Ascending aorta (tissue), 2 donors: ENCODE measurements at regions of chr2 and their contacts with region 1.

Region 1: DNA sequence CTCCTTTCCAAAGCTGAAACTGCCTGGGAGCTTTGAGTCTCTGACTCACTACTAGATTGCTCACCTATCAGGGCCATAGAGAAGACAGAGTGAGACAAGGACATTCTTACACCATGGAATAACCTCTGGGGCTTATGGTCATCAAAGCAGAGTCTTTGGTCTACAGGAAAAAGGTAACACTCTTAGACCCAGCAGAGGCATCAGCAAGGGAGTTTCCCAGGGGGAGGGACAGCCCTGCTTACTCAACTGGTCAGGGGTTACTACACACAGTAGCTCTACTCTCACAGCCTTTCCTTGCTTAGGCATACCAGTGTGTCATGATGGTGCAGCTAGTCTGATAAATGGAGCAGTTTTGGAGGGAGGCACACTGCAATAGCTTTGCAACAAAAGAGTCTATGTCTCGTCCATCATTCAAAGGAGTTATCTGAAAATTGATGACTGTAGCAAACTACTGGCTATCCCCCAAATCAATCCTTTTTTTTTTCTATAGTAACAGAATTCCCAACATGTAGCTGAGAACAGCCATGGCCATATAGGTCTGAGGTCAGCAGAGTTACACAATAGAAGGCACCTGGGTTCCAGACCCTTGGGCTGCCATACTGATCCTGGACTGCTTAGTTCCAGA is 22.4 kb upstream of the CD28 start:
- DNase-seq: peak in 1 of 2 donors; percentile 74
- H3K4me3 ChIP-seq: no peak overlapping the region
- H3K27ac ChIP-seq: peak overlapping the region; percentile 88 to 96
- H3K4me1 ChIP-seq: peaks cover 18 to 65% of the 10 kb centered on the region in 2 donors
- H3K27me3 ChIP-seq: no peaks in the 10 kb centered on the region
- CTCF ChIP-seq: no peak

Region 2: DNA sequence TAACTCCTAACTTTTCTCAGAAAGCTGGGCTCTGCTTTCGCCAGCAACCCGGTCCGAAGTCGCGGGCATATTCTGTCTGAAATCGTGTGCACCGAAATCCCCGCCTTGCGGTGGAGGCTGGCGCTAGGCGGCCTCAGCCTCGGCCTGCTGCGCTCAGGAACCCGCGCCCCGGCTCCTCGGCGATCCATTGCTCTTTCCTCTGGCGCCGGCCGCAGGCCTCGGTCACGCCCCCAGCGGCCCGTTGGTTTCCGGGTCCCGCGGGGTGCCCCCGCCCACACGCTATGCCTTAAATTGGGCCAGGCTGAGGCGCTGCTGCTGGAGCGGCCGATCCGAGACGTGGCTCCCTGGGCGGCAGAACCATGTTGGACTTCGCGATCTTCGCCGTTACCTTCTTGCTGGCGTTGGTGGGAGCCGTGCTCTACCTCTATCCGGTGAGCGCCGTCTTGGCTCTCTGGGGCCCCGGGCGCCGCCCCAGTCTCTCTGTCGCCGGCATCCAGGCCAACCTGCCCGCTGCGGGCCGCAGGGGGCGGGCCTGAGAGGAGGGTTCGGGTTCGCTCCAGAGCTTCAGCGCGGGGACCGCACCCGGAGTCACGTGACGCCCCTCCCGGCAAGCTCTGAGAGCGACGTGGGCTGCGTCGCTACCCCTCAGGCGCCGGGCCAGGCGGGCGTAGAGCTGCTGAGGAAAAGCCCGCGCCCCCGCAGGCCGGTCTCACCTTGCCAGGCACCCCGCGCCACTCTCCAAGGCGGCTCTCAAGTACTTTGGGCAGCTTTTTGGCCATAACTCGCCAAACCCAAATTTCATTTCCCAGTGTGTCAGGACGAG is 445.1 kb before region 1 on chr2 and contains the start of gene CYP20A1:
- intact Hi-C with region 1: loop called (anchors 2 kb)
- DNase-seq: peak; percentile 82 to 98
- H3K4me3 ChIP-seq: peak within 1 kb of the TSS; percentile 51 to 72
- H3K27ac ChIP-seq: peak within 1 kb of the TSS; percentile 94 to 96
- H3K4me1 ChIP-seq: peaks cover 0 to 16% of the 10 kb centered on the region in 2 donors
- H3K27me3 ChIP-seq: no peaks in the 10 kb centered on the region
- CTCF ChIP-seq: peak in 2 of 3 experiments; percentile 21 to 40
- total RNA-seq, gene CYP20A1: 13.6 TPM

Region 3: DNA sequence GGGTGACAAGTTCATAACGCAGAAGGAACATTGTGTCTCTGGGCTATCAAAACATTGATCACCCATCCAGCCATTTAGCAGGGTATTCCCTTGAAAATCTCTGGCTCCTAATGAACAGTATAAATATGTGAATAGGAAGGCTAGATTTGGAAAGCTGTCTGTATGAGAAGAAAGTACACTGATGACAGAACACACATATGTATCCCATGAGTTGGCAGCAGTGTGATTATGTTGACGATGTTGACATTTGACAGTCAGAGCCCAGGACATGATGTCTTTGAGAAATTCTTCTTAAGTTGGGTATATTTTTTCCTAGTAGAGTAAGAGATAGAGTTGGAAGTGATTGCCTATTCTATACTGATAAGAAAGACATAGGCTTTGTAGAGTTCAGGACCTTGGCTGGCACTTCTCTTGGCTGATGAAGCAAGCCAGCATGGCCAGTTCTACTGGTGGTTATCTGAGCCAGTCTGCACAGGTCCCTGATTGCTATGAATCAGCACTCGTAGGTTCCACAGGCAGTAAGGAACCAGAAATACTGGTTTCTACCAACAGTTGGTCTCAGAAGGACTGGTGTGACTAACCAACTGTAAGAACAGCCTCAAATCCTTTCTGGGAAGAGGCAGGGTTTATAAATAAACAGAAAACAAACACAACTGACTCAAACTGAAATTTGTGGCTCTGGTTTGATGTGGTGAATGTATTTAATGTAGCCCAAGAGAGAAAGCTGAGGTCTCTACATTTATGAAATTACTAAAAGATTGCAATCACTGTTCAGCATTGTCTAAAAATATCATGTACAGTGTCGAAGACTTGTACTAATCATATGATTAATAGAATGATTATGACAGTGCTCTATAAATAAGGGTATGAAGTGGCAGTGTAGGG is 105.0 kb before region 1 on chr2:
- intact Hi-C with region 1: loop called (anchors 2 kb)
- DNase-seq: peak in 1 of 2 donors; percentile 76
- H3K4me3 ChIP-seq: no peak overlapping the region
- H3K27ac ChIP-seq: peak overlapping the region; percentile 56 to 76
- H3K4me1 ChIP-seq: peaks cover 3 to 21% of the 10 kb centered on the region in 2 donors
- H3K27me3 ChIP-seq: no peaks in the 10 kb centered on the region
- CTCF ChIP-seq: no peak

Region 4: DNA sequence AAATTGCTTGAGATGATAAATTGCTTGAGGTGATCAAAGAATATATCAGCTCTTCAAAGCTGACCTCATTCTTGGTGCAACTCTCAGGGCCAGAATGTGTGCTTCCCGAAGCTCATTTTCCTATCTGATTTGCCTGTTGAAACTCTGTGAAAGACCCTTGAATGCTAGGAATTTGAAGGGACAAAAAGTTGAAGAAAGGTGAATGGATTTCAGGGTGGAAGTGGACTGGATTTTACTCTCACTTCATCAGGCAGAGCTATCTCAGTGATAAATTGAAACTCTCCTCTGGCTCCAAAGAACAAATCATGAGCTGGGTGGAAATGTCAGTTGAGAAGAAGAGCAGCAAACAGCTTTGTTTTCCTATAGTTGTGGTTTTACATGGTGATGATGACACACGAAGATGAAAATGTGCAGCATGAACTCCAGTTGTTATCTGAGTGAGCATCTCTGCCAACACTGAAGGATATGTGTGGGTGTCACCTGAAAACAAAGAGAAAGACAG is 56.8 kb after region 1 on chr2:
- intact Hi-C with region 1: loop called (anchors 5 kb)
- DNase-seq: no peak
- H3K4me3 ChIP-seq: no peak overlapping the region
- H3K27ac ChIP-seq: no peak overlapping the region
- H3K4me1 ChIP-seq: peaks cover 0 to 2% of the 10 kb centered on the region in 2 donors
- H3K27me3 ChIP-seq: no peaks in the 10 kb centered on the region
- CTCF ChIP-seq: no peak

Region 5: GRCh38 chr2:203804070-203804469 is 120.0 kb after region 1 on chr2:
- intact Hi-C with region 1: loop called (anchors 2 kb)
- DNase-seq: peak in 1 of 2 donors; percentile 81
- H3K4me3 ChIP-seq: no peak overlapping the region
- H3K27ac ChIP-seq: peak overlapping the region; percentile 20 to 77
- H3K4me1 ChIP-seq: peaks cover 0 to 12% of the 10 kb centered on the region in 2 donors
- H3K27me3 ChIP-seq: no peaks in the 10 kb centered on the region
- CTCF ChIP-seq: no peak

Region 6: GRCh38 chr2:204152616-204153015 is 468.6 kb after region 1 on chr2:
- intact Hi-C with region 1: no loop called
- DNase-seq: no peak
- H3K4me3 ChIP-seq: no peak overlapping the region
- H3K27ac ChIP-seq: no peak overlapping the region
- H3K4me1 ChIP-seq: peaks cover 0 to 4% of the 10 kb centered on the region in 2 donors
- H3K27me3 ChIP-seq: no peaks in the 10 kb centered on the region
- CTCF ChIP-seq: no peak

Region 7: DNA sequence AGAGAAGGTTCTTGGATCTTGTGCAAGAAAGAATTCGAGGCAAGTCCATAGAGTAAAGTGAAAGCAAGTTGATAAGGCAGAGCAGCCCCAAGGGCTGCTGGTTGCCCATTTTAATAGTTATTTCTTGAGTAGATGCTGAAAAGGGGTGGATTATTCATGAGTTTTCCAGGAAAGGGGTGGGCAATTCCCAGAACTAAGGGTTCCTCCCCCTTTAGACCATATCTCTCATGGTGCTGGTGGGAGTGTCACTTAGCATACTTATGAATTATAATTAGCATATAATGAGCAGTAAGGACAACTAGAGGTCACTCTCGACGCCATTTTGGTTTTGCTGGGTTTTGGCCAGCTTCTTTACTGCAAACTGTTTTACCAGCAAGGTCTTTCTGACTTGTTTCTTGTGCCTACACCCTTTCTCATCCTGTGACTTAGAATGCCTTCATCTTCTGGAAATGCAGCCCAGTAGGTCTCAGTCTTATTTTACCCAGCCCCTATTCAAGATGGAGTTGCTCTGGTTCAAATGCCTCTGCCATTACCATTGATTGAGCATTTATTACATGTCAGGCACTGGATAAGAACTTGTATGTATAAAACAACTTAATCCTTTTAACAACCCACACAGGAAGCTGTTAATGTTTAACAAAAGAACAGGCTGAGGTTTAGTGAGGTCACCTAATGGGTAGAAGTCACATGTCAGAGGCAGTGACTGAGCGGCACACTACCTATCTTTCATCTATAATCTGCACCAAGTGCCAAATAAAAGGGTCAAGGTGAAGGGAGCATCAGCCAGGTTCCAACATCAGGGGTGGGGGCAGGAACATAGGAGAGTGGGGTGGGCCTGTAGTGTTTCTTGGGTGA is 503.4 kb after region 1 on chr2:
- intact Hi-C with region 1: no loop called
- DNase-seq: no peak
- H3K4me3 ChIP-seq: no peak overlapping the region
- H3K27ac ChIP-seq: no peak overlapping the region
- H3K4me1 ChIP-seq: no peaks in the 10 kb centered on the region
- H3K27me3 ChIP-seq: no peaks in the 10 kb centered on the region
- CTCF ChIP-seq: no peak